Activated CD4-positive, alpha-beta memory T cell treated with anti-CD3 and anti-CD28 coated beads for 36 hours (primary cell): ENCODE measurements at regions of chr2 and their contacts with region 1.

Region 1: GRCh38 chr2:187581125-187581896 is 27.1 kb upstream of the TFPI start:
- DNase-seq: no peak
- H3K4me3 Mint-ChIP-seq: no peak overlapping the region
- H3K27ac Mint-ChIP-seq: no peak overlapping the region
- H3K4me1 Mint-ChIP-seq: peaks cover 6% of the 10 kb centered on the region
- H3K27me3 Mint-ChIP-seq: peaks cover 1% of the 10 kb centered on the region

Region 2: DNA sequence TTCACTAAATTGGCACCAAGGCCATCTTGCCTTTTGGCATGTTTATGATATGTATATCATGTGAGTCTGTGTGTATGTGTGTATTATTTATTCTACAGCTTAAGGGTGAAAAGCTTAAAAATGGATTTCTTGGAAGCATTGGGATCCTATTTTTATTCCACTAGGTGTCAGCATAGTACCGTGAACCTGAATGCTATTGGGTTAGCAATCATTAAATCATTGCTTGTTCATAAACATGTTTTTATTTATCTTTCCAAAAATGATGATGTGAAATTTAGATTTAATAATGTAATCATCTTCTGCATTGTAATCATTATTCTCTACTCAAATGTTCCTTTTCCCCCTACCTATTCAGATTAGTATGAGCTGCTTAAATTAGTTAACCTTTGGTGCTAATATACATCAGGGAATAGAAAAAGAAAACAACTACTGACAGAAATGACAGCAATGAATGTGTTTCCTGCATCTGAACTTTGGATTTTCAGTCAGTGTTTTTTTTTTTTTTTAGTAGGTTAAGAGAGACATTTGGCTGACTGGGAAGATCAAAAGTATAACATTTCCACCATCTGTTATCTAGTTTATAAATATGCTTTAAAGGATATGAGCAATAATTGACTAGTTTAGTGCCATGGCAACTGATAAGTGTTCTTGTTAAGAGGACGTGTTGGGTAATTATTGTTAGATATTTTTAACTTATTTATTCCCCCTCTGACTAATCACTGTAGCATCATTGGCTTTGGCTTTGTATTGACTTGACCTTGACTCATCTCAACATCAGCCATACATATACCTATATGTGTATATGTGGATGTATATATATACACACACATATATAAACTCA is 718.2 kb before region 1 on chr2:
- CTCF ChIA-PET with region 1: no interaction called
- POLR2A ChIA-PET with region 1: no interaction called
- intact Hi-C with region 1: loop called (anchors 5 kb)
- DNase-seq: no peak
- H3K4me3 Mint-ChIP-seq: no peak overlapping the region
- H3K27ac Mint-ChIP-seq: no peak overlapping the region
- H3K4me1 Mint-ChIP-seq: no peaks in the 10 kb centered on the region
- H3K27me3 Mint-ChIP-seq: no peaks in the 10 kb centered on the region

Region 3: DNA sequence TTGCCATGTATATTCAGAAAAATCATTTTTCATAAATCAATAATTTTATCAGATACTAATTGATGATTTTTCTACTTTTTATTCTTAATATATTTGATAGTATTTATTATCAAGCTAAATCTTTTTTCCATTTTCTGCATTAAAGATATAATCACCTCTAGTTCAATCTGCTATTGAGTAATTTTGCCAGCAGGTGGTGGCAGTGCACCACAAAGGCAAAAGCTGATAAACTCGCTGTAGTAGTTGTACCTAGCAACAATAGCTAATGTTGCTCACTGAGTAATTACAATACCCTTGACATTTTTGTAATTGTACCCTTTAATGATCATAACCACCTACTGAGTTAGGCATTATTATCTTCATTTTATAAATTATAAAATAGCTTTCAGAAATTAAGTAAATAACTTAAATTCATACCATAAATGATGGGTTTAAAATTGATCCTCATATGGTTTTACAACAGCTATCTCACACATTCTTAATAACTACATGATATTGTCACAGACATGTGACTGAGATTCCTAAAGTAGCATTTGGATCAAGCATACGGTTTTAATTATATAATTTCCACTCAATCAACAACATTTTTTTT is 81.3 kb before region 1 on chr2:
- CTCF ChIA-PET with region 1: interaction called, 31 read pairs
- POLR2A ChIA-PET with region 1: no interaction called
- intact Hi-C with region 1: loop called (anchors 1 kb)
- DNase-seq: peak; percentile 51
- H3K4me3 Mint-ChIP-seq: no peak overlapping the region
- H3K27ac Mint-ChIP-seq: no peak overlapping the region
- H3K4me1 Mint-ChIP-seq: no peaks in the 10 kb centered on the region
- H3K27me3 Mint-ChIP-seq: peaks cover 4% of the 10 kb centered on the region

Region 4: GRCh38 chr2:187842978-187843847 is 261.9 kb after region 1 on chr2:
- CTCF ChIA-PET with region 1: no interaction called
- POLR2A ChIA-PET with region 1: no interaction called
- intact Hi-C with region 1: loop called (anchors 1 kb)
- DNase-seq: no peak
- H3K4me3 Mint-ChIP-seq: no peak overlapping the region
- H3K27ac Mint-ChIP-seq: no peak overlapping the region
- H3K4me1 Mint-ChIP-seq: no peaks in the 10 kb centered on the region
- H3K27me3 Mint-ChIP-seq: no peaks in the 10 kb centered on the region